ENCODE measurements at regions of chr4 and their contacts with region 1.

Region 1: DNA sequence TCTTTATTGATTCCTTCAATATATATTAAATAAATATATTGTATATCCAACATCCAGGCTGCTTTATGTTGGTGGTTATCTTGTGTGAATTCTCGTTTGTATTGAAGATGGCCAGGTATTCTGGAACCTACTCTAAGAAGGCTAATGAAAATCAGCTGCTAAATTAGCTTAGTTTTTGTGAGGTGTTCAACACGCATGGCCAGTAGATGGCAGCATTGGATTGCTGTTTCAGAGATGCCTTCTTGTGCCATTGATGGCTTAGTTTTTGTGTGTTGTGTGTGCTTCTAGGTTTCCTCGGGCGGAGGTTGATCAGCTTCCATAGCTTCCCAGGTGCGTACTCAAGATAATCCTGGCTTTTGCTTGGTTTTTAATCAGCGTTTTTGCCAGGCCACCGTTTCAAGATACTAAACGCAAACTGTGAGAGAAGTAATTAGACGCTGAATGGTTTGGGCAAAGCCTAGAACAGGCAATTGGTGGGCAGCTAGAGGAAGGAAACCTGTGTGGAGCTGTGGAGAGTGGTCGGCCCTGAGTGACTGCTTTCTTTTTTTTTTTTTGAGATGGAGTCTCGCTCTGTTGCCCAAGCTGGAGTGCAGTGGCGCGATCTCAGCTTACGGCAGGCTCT is 15.1 kb downstream of the NOCT start:
- DNase-seq: peak; percentile 84
- ATAC-seq: peak; percentile 81
- H3K4me3 Mint-ChIP-seq: no peak overlapping the region
- H3K27ac Mint-ChIP-seq: no peak overlapping the region
- H3K4me1 Mint-ChIP-seq: peaks cover 12% of the 10 kb centered on the region
- H3K27me3 Mint-ChIP-seq: no peaks in the 10 kb centered on the region
- CTCF ChIP-seq: peak; percentile 71

Region 2: DNA sequence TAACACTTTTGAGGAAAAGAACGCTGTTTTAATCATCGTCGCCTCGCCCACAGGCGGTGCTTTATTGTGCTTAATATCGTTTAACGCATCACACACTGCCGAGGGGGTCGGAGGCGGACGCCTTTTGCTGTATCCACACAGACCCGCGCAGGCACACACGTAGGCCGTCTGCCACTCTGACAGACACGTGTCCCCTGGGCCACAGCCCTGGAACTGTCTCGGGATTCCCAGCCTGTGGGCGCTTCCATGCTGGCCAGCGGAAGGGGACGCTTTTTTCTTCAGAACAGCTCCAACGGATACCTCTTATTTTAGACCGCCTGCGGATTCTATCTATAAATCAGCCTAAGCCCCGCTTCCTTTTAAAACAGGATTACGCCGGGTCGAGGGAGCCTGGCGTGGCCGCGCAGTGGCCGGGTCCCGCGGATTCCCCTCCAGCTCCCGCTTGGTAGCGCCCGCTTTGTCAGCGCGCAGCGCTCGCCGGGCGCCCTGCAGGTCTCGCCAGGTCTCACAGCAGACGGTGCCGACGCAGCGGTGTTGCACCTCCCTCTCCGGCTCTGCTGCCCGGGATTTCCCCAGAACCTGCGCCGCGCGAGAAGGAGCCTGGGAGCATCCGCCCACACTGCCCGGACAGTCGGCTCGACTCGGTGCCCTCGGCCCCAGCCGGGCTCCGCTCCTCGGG is 15.3 kb before region 1 on chr4 and contains the start of gene NOCT:
- CTCF ChIA-PET with region 1: interaction called, 79 read pairs
- POLR2A ChIA-PET with region 1: interaction called, 9 read pairs
- intact Hi-C with region 1: no loop called
- DNase-seq: peak; percentile 97
- ATAC-seq: peak; percentile 93
- H3K4me3 Mint-ChIP-seq: peak within 1 kb of the TSS; percentile 91
- H3K27ac Mint-ChIP-seq: peak within 1 kb of the TSS; percentile 96
- H3K4me1 Mint-ChIP-seq: peaks cover 41% of the 10 kb centered on the region
- H3K27me3 Mint-ChIP-seq: no peaks in the 10 kb centered on the region
- CTCF ChIP-seq: no peak
- total RNA-seq, gene NOCT: 21.5 to 24.9 TPM

Region 3: DNA sequence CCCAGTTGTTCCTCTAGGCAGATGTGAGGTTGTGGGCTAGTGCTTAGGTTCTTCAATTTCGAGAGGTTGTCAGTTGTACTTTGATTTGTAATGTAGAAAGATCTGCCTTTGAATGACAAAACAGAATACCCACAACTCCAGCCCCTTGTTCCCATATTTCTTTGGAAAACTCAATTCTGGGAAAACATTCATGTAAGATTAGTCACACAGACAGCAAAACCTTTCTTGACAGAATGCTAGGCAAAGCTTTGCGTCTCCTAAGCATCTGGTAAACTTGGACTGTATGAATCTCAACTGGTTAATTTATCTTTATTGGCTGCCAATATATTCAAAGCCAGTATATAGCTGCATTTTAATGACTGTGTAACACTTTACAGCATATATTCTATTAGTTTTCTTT is 19.7 kb after region 1 on chr4:
- CTCF ChIA-PET with region 1: interaction called, 52 read pairs
- POLR2A ChIA-PET with region 1: interaction called, 5 read pairs
- intact Hi-C with region 1: no loop called
- DNase-seq: no peak
- ATAC-seq: no peak
- H3K4me3 Mint-ChIP-seq: no peak overlapping the region
- H3K27ac Mint-ChIP-seq: peak overlapping the region; percentile 8
- H3K4me1 Mint-ChIP-seq: peaks cover 11% of the 10 kb centered on the region
- H3K27me3 Mint-ChIP-seq: no peaks in the 10 kb centered on the region
- CTCF ChIP-seq: no peak

Region 4: GRCh38 chr4:139083956-139084803 is 53.5 kb after region 1 on chr4:
- CTCF ChIA-PET with region 1: interaction called, 51 read pairs
- POLR2A ChIA-PET with region 1: interaction called, 3 read pairs
- intact Hi-C with region 1: loop called (anchors 5 kb)
- DNase-seq: peak; percentile 88
- ATAC-seq: peak; percentile 49
- H3K4me3 Mint-ChIP-seq: peak overlapping the region; percentile 100
- H3K27ac Mint-ChIP-seq: peak overlapping the region; percentile 100
- H3K4me1 Mint-ChIP-seq: peaks cover 25% of the 10 kb centered on the region
- H3K27me3 Mint-ChIP-seq: no peaks in the 10 kb centered on the region
- CTCF ChIP-seq: no peak

Region 5: GRCh38 chr4:139123910-139124309 is 93.2 kb after region 1 on chr4:
- CTCF ChIA-PET with region 1: interaction called, 14 read pairs
- POLR2A ChIA-PET with region 1: no interaction called
- intact Hi-C with region 1: no loop called
- DNase-seq: no peak
- ATAC-seq: no peak
- H3K4me3 Mint-ChIP-seq: no peak overlapping the region
- H3K27ac Mint-ChIP-seq: no peak overlapping the region
- H3K4me1 Mint-ChIP-seq: no peaks in the 10 kb centered on the region
- H3K27me3 Mint-ChIP-seq: no peaks in the 10 kb centered on the region
- CTCF ChIP-seq: no peak

Measured in activated CD8-positive, alpha-beta T cell treated with anti-CD3 and anti-CD28 coated beads for 36 hours (primary cell).